Left ventricle myocardium superior (tissue), 1 donor: ENCODE measurements at regions of chr22 and their contacts with region 1.

Region 1: GRCh38 chr22:21894799-21895198 is 27.4 kb upstream of the MAPK1 start:
- DNase-seq: no peak
- ATAC-seq: no peak

Region 2: DNA sequence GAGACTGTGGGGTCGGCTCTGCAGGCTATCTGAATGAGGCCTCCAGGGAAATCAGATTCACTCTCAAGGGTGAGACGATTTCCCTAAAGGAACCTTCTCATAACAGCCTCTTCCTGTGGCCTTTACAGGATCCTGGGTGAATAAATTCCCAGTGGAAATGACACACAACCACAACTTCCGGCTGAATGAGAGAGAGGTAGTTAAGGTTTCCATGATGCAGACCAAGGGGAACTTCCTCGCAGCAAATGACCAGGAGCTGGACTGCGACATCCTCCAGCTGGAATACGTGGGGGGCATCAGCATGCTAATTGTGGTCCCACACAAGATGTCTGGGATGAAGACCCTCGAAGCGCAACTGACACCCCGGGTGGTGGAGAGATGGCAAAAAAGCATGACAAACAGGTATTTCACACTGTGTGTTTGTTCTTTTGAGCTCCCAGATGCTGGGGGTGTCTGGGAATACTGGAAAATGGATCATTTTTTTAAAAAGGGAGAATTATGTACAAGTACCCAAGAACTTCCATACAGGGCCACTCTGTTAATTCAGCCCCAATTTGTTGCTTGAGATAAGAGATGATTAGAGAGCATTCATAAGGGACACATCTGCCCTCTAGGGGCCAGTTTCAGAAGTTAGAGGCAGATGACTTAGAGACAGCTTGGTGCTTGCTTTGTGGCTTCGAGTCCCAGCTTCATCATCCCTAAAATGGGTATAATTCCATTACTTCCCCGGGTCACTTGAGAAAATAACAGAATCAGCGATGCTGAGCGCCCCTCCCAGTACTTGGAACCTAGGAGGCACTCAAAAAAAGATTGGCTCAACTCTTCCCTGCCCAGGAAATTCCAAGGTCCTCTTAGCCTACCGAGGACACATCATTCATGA is 1110.7 kb before region 1 on chr22:
- intact Hi-C with region 1: loop called (anchors 10 kb)
- DNase-seq: no peak
- ATAC-seq: peak; percentile 33

Region 3: DNA sequence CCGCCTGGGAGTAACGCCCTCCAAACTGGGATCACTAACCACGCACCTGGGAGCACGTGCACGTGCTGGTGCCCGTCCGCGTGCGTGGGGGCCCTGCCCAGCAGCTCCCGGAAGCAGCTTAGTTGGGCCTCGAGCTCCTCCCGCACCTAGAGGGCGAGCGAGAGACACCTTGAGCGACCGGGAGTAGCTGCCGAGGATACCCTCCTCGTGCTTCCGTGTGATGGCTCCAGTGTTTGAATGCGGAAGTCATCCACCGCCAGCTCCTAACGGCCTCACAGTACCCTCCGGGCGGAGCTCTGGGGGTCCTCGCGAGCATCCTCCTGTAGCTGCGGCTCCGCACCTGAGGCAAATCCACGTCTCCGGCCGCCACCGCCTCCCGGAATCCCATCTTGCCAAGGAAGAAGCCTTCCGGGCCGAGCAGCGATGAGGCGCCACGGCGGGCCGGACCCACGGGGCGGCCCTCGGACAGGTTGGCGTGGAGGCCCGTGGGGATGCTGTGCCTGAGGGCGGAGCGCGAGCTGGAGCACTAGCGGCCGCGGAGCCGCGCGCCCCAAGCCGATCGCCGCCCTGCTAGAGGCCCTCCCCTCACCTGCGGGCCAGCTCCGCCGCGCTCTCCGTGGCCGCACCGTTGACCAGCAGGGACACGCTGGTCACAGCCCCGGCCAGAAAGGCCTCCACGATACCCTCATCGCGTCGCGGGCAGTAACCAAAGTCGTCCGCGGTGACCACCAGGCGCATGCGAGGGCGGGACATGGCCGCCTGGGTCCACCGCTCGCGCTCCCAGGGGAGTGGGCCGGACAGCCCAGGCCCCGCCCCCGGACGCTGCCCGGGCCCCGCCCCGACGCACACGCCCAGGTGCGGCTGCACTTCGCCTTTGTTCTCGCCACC is 265.3 kb before region 1 on chr22 and contains the start of gene YDJC:
- intact Hi-C with region 1: no loop called
- DNase-seq: peak; percentile 96
- ATAC-seq: peak; percentile 98
- total RNA-seq, gene YDJC: 4.9 TPM